Psoas muscle (tissue), 8 donors: ENCODE measurements at regions of chr18 and their contacts with region 1.

Region 1: GRCh38 chr18:48657447-48658120 is 118.8 kb downstream of the CTIF start:
- DNase-seq: no peak
- ATAC-seq: no peak
- H3K4me3 ChIP-seq: no peak overlapping the region
- H3K27ac ChIP-seq: no peak overlapping the region
- H3K4me1 ChIP-seq: peaks cover 23% of the 10 kb centered on the region
- H3K27me3 ChIP-seq: no peaks in the 10 kb centered on the region
- CTCF ChIP-seq: no peak

Region 2: GRCh38 chr18:48605408-48605845 is 52.2 kb before region 1 on chr18:
- intact Hi-C with region 1: loop called (anchors 5 kb)
- DNase-seq: no peak
- ATAC-seq: no peak
- H3K4me3 ChIP-seq: no peak overlapping the region
- H3K27ac ChIP-seq: no peak overlapping the region
- H3K4me1 ChIP-seq: peaks cover 46% of the 10 kb centered on the region
- H3K27me3 ChIP-seq: no peaks in the 10 kb centered on the region
- CTCF ChIP-seq: no peak

Region 3: GRCh38 chr18:48719974-48720654 is 62.5 kb after region 1 on chr18:
- intact Hi-C with region 1: no loop called
- DNase-seq: peak in 1 of 2 donors; percentile 75
- ATAC-seq: peak; percentile 59 to 85 (median 80)
- H3K4me3 ChIP-seq: no peak overlapping the region
- H3K27ac ChIP-seq: no peak overlapping the region
- H3K4me1 ChIP-seq: peaks cover 14% of the 10 kb centered on the region
- H3K27me3 ChIP-seq: no peaks in the 10 kb centered on the region
- CTCF ChIP-seq: no peak